ENCODE measurements at regions of chr2 and their contacts with region 1.

Region 1: DNA sequence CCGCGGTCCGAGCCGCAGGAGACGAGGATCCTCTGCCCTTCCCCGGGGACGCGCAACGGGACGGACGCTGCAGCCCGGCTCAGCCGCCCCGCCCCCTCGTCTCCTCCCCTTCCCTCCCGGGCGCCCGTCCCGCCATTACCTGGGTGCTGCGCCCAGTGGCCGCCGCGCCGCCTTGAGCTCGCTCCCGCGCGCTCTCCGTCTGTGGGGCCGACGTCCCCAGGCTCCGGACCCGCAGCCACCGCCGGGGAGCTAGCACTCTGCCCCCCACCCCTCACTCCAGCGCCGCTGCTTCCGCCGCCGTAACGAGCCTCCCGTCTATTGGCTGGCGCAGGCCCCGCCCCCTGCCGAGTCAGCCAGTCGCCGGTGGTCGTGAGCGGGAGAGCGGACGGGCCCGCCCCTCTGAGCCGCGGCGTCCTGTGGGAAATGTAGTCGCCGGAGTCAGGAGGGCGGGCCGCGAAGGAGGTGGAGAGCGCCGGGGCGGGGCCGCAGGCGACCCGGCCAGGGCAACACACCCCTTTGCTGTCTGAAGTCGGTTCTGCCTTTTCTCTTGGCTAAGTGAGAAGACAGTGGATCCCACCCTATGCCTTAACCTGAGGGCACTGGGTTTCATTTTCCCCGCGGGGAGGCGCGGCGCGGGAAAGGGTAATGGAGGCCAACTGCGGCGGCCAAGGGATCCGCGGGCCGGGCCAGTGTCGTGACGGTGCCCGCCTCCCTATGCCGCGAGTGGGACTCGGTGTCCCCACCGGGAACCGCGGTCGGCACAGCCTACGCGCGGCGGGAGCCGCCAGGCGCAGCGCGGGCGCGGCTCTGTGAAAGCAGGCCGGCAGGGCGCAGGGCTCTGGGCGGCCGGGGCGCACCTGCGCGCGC is at the start of gene SAP130:
- DNase-seq: peak; percentile 99
- H3K4me3 ChIP-seq: peak within 1 kb of the TSS; percentile 93 to 100 (median 96)
- H3K27ac ChIP-seq: peak within 1 kb of the TSS; percentile 96 to 100 (median 99)
- H3K4me1 ChIP-seq: peaks cover 0 to 20% (median 19%) of the 10 kb centered on the region in 4 donors
- H3K27me3 ChIP-seq: no peaks in the 10 kb centered on the region
- CTCF ChIP-seq: no peak
- EP300 ChIP-seq: no peak
- POLR2A ChIP-seq: peak; percentile 59 to 72
- total RNA-seq, gene SAP130: 5.8 to 9.4 (median 6.9) TPM

Region 2: GRCh38 chr2:128090945-128091725 is 63.1 kb after region 1 on chr2 and contains the start of gene UGGT1:
- intact Hi-C with region 1: loop called (anchors 1 kb)
- DNase-seq: peak; percentile 96
- H3K4me3 ChIP-seq: peak within 1 kb of the TSS; percentile 83 to 98 (median 96)
- H3K27ac ChIP-seq: peak within 1 kb of the TSS; percentile 86 to 93 (median 87)
- H3K4me1 ChIP-seq: peaks cover 0 to 32% (median 16%) of the 10 kb centered on the region in 4 donors
- H3K27me3 ChIP-seq: no peaks in the 10 kb centered on the region
- CTCF ChIP-seq: no peak
- EP300 ChIP-seq: peak in 1 of 4 donors; percentile 7
- POLR2A ChIP-seq: peak; percentile 90 to 94
- total RNA-seq, gene UGGT1: 19.8 to 47.9 (median 28.2) TPM

Measured in sigmoid colon (tissue), 7 donors.